Posterior vena cava (tissue), 2 donors: ENCODE measurements at regions of chr4 and their contacts with region 1.

Region 1: GRCh38 chr4:128688846-128689467 is 120.5 kb upstream of the JADE1 start:
- DNase-seq: no peak

Region 2: GRCh38 chr4:126976850-126977632 is 1711.9 kb before region 1 on chr4:
- intact Hi-C with region 1: no loop called
- DNase-seq: no peak

Region 3: GRCh38 chr4:128653517-128654444 is 35.2 kb before region 1 on chr4:
- intact Hi-C with region 1: no loop called
- DNase-seq: no peak

Region 4: GRCh38 chr4:128670513-128670912 is 18.4 kb before region 1 on chr4:
- intact Hi-C with region 1: loop called in 1 of 2 experiments (anchors 1 kb)
- DNase-seq: no peak

Region 5: GRCh38 chr4:128793859-128794672 is 105.1 kb after region 1 on chr4:
- intact Hi-C with region 1: no loop called
- DNase-seq: no peak